OCI-LY7 (cell line): ENCODE measurements at regions of chr19 and their contacts with region 1.

Region 1: GRCh38 chr19:38049105-38049649 is 142.2 kb downstream of the SIPA1L3 start:
- DNase-seq: peak; percentile 79
- H3K4me3 ChIP-seq: peak overlapping the region; percentile 53
- H3K27ac ChIP-seq: peak overlapping the region; percentile 100
- H3K4me1 ChIP-seq: peaks cover 72% of the 10 kb centered on the region
- CTCF ChIP-seq: no peak

Region 2: GRCh38 chr19:37738371-37738770 is 310.8 kb before region 1 on chr19:
- CTCF ChIA-PET with region 1: no interaction called
- POLR2A ChIA-PET with region 1: no interaction called
- intact Hi-C with region 1: no loop called
- DNase-seq: no peak
- H3K4me3 ChIP-seq: no peak overlapping the region
- H3K27ac ChIP-seq: no peak overlapping the region
- H3K4me1 ChIP-seq: no peaks in the 10 kb centered on the region
- CTCF ChIP-seq: no peak

Region 3: GRCh38 chr19:37931881-37932655 is 117.1 kb before region 1 on chr19:
- CTCF ChIA-PET with region 1: interaction called, 3 read pairs
- POLR2A ChIA-PET with region 1: interaction called, 6 read pairs
- intact Hi-C with region 1: loop called (anchors 1 kb)
- DNase-seq: peak; percentile 60
- H3K4me3 ChIP-seq: peak overlapping the region; percentile 65
- H3K27ac ChIP-seq: peak overlapping the region; percentile 61
- H3K4me1 ChIP-seq: peaks cover 68% of the 10 kb centered on the region
- CTCF ChIP-seq: peak; percentile 31; the same call in 1 of the 2 replicates

Region 4: GRCh38 chr19:37987356-37988332 is 61.5 kb before region 1 on chr19:
- CTCF ChIA-PET with region 1: no interaction called
- POLR2A ChIA-PET with region 1: no interaction called
- intact Hi-C with region 1: loop called (anchors 2 kb)
- DNase-seq: peak; percentile 64
- H3K4me3 ChIP-seq: no peak overlapping the region
- H3K27ac ChIP-seq: peak overlapping the region; percentile 88
- H3K4me1 ChIP-seq: peaks cover 53% of the 10 kb centered on the region
- CTCF ChIP-seq: peak; percentile 92

Region 5: GRCh38 chr19:38033658-38034498 is 15.3 kb before region 1 on chr19:
- CTCF ChIA-PET with region 1: no interaction called
- POLR2A ChIA-PET with region 1: interaction called, 32 read pairs
- intact Hi-C with region 1: loop called (anchors 1 kb)
- DNase-seq: peak; percentile 95
- H3K4me3 ChIP-seq: peak overlapping the region; percentile 56
- H3K27ac ChIP-seq: peak overlapping the region; percentile 97
- H3K4me1 ChIP-seq: peaks cover 76% of the 10 kb centered on the region
- CTCF ChIP-seq: peak; percentile 61